CD8-positive, alpha-beta memory T cell (primary cell): ENCODE measurements at regions of chr5 and their contacts with region 1.

Region 1: DNA sequence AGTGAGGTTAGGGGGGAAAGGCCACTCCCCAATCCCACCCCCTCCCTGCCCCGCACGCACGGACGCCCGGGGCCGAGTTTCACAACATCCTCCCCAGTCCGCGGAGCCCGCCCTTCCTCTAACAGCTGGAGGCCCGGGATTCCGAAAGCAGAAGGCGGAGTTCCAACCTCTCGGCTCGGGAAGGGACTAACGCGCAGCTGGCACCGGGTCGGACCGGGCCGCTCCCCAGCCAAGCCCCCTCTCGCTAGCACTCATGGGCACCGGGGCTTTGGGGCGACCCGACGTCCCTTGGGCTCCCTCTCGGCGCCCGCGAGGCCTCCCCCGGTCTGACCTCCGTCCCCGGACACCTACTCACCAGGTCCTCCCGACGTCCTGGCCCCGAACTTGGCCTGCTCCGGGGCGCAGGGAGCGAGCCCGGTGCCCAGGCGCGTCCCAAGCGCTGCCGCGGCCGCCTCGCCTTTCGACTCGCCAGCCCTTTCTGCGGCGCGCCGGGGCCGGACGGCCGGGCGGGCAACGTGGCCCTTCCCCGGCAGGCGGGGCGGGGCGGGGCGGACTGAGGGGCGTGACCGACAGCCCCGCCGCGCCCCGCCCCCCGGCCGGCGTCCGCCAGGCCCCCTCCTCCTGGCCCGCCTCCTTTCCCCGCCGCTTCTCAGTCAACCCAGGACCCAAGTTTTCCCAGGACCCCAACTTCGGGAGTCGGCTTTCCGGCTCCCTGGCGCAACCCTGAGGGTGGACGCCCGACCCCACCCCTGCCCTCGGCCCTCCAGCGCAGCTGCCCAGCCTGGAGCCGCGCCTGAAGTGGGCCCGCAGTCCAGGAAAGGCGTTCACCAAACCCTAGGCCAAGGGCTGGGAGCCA is at the start of gene MGAT1:
- DNase-seq: peak; percentile 65 to 80 (median 74)
- H3K4me3 ChIP-seq: peak within 1 kb of the TSS; percentile 88
- H3K4me3 Mint-ChIP-seq: peak within 1 kb of the TSS; percentile 89 to 100 (median 96)
- H3K27ac ChIP-seq: peak within 1 kb of the TSS; percentile 86
- H3K27ac Mint-ChIP-seq: peak within 1 kb of the TSS; percentile 89 to 97 (median 95)
- H3K4me1 ChIP-seq: peaks cover 84% of the 10 kb centered on the region
- H3K4me1 Mint-ChIP-seq: peaks cover 79 to 84% (median 81%) of the 10 kb centered on the region in 3 donors
- H3K27me3 ChIP-seq: no peaks in the 10 kb centered on the region
- H3K27me3 Mint-ChIP-seq: peaks cover 0 to 2% of the 10 kb centered on the region in 2 donors
- total RNA-seq, gene MGAT1: 125 to 132 TPM

Region 2: GRCh38 chr5:180860887-180861822 is 58.6 kb after region 1 on chr5 and contains the start of gene ZFP62:
- CTCF ChIA-PET with region 1: interaction called, 9 read pairs
- POLR2A ChIA-PET with region 1: interaction called, 34 read pairs
- DNase-seq: peak; percentile 77 to 90 (median 86)
- H3K4me3 ChIP-seq: peak within 1 kb of the TSS; percentile 93
- H3K4me3 Mint-ChIP-seq: peak within 1 kb of the TSS; percentile 89 to 98 (median 94)
- H3K27ac ChIP-seq: peak within 1 kb of the TSS; percentile 86
- H3K27ac Mint-ChIP-seq: peak within 1 kb of the TSS; percentile 85 to 99 (median 94)
- H3K4me1 ChIP-seq: peaks cover 12% of the 10 kb centered on the region
- H3K4me1 Mint-ChIP-seq: peaks cover 16 to 29% (median 25%) of the 10 kb centered on the region in 3 donors
- H3K27me3 ChIP-seq: no peaks in the 10 kb centered on the region
- H3K27me3 Mint-ChIP-seq: peaks cover 4 to 5% of the 10 kb centered on the region in 2 donors
- total RNA-seq, gene ZFP62: 27.6 to 34.1 TPM

Region 3: DNA sequence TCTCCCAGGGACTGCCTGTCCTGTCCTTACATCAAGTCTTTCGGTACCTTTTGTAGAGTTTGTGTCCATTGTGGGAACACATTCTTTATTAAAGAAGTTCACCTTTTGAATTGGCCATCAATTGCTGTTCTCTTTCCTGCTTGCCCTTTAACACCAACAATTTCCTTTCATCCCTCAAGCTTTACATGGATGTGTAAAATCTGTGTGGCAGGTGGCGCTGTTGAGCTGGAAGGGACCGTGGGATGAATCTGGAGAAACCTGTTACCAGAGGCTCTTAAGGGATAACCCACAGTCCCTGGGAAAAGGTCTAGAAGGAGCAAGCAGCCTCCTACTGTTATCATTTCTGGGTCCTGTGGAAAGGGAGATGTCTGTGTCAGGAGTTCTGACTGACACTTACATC is 66.4 kb after region 1 on chr5:
- CTCF ChIA-PET with region 1: interaction called, 12 read pairs
- POLR2A ChIA-PET with region 1: no interaction called
- DNase-seq: peak; percentile 25 to 64 (median 34)
- H3K4me3 ChIP-seq: no peak overlapping the region
- H3K4me3 Mint-ChIP-seq: no peak overlapping the region
- H3K27ac ChIP-seq: no peak overlapping the region
- H3K27ac Mint-ChIP-seq: no peak overlapping the region
- H3K4me1 ChIP-seq: no peaks in the 10 kb centered on the region
- H3K4me1 Mint-ChIP-seq: peaks cover 3 to 11% (median 10%) of the 10 kb centered on the region in 3 donors
- H3K27me3 ChIP-seq: no peaks in the 10 kb centered on the region
- H3K27me3 Mint-ChIP-seq: peaks cover 15 to 24% of the 10 kb centered on the region in 2 donors